ENCODE measurements at regions of chr17 and their contacts with region 1.

Region 1: GRCh38 chr17:14300575-14301278 is at the start of gene HS3ST3B1:
- DNase-seq: peak; percentile 99
- ATAC-seq: peak; percentile 80 to 94 (median 82)
- H3K4me3 ChIP-seq: peak within 1 kb of the TSS; percentile 58
- H3K4me3 Mint-ChIP-seq: peak within 1 kb of the TSS; percentile 97
- H3K27ac ChIP-seq: peak within 1 kb of the TSS; percentile 77
- H3K27ac Mint-ChIP-seq: peak within 1 kb of the TSS; percentile 91 to 93
- H3K4me1 ChIP-seq: peaks cover 62% of the 10 kb centered on the region
- H3K4me1 Mint-ChIP-seq: peaks cover 57 to 76% of the 10 kb centered on the region in 2 donors
- H3K27me3 ChIP-seq: peaks cover 17% of the 10 kb centered on the region
- H3K27me3 Mint-ChIP-seq: peaks cover 17 to 22% of the 10 kb centered on the region in 2 donors
- CTCF ChIP-seq: no peak
- total RNA-seq, gene HS3ST3B1: 14.1 to 18.6 (median 17.1) TPM

Region 2: DNA sequence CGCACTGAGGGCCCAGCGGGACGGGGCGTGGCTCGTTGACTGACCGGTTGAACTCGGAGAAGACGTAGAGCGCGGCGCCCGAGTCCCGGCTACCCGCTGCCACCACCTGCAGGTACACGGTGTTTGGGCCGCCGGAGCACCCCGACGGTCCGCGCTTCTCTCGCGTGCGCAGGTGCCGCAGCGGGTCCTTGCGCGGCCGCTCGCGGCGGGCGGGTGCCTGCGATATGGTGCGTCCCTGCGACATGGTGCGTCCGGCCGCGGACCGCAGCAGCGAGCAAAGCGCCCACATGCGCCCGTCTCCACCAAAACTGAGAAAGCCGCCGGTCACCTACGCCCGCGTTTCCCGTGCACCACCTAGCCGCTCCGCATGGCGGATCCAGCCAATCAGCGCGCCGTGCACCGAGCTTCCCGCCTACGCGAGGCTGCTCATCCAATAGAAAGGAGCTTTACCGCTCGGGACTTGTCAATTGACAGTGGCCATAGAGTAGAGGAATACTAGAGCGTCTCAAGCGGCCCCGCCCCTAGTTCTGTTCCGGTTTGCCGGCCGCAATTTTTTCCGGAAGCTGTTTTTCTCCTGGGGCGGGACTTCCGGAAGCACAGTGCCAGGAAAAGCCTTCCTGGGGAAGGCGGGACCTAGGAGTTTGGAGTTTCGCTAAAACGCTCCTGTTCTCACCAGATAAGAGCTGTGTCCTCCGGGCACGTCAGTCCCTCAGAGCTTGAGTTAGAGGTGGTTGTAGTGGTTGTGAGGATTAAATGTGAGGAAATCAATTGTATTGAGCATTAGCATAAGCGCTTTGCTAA is 1282.9 kb before region 1 on chr17 and contains the start of gene ELAC2:
- intact Hi-C with region 1: loop called (anchors 2 kb)
- DNase-seq: peak; percentile 94 to 98
- ATAC-seq: peak; percentile 98 to 100 (median 98)
- H3K4me3 ChIP-seq: peak within 1 kb of the TSS; percentile 56
- H3K4me3 Mint-ChIP-seq: peak within 1 kb of the TSS; percentile 98
- H3K27ac ChIP-seq: peak within 1 kb of the TSS; percentile 71
- H3K27ac Mint-ChIP-seq: peak within 1 kb of the TSS; percentile 93 to 96
- H3K4me1 ChIP-seq: peaks cover 18% of the 10 kb centered on the region
- H3K4me1 Mint-ChIP-seq: peaks cover 32 to 36% of the 10 kb centered on the region in 2 donors
- H3K27me3 ChIP-seq: no peaks in the 10 kb centered on the region
- H3K27me3 Mint-ChIP-seq: no peaks in the 10 kb centered on the region
- CTCF ChIP-seq: no peak
- total RNA-seq, gene ELAC2: 65.5 to 84.2 (median 83.4) TPM

Region 3: GRCh38 chr17:13594762-13595598 is 705.7 kb before region 1 on chr17:
- intact Hi-C with region 1: loop called (anchors 1 kb)
- DNase-seq: peak; percentile 53 to 91
- ATAC-seq: peak; percentile 71 to 84 (median 76)
- H3K4me3 ChIP-seq: no peak overlapping the region
- H3K4me3 Mint-ChIP-seq: no peak overlapping the region
- H3K27ac ChIP-seq: no peak overlapping the region
- H3K27ac Mint-ChIP-seq: no peak overlapping the region
- H3K4me1 ChIP-seq: no peaks in the 10 kb centered on the region
- H3K4me1 Mint-ChIP-seq: peaks cover 5 to 6% of the 10 kb centered on the region in 2 donors
- H3K27me3 ChIP-seq: peaks cover 3% of the 10 kb centered on the region
- H3K27me3 Mint-ChIP-seq: peaks cover 41 to 42% of the 10 kb centered on the region in 2 donors
- CTCF ChIP-seq: peak; percentile 93

Region 4: GRCh38 chr17:14048169-14048568 is 252.6 kb before region 1 on chr17:
- intact Hi-C with region 1: loop called (anchors 1 kb)
- DNase-seq: peak in 1 of 2 donors; percentile 38
- ATAC-seq: peak in 2 of 3 donors; percentile 54
- H3K4me3 ChIP-seq: no peak overlapping the region
- H3K4me3 Mint-ChIP-seq: no peak overlapping the region
- H3K27ac ChIP-seq: no peak overlapping the region
- H3K27ac Mint-ChIP-seq: no peak overlapping the region
- H3K4me1 ChIP-seq: no peaks in the 10 kb centered on the region
- H3K4me1 Mint-ChIP-seq: peaks cover 5 to 9% of the 10 kb centered on the region in 2 donors
- H3K27me3 ChIP-seq: no peaks in the 10 kb centered on the region
- H3K27me3 Mint-ChIP-seq: no peaks in the 10 kb centered on the region
- CTCF ChIP-seq: peak; percentile 25

Region 5: GRCh38 chr17:14203388-14203787 is 97.3 kb before region 1 on chr17:
- intact Hi-C with region 1: loop called (anchors 2 kb)
- DNase-seq: peak in 1 of 2 donors; percentile 74
- ATAC-seq: peak in 2 of 3 donors; percentile 11 to 39
- H3K4me3 ChIP-seq: no peak overlapping the region
- H3K4me3 Mint-ChIP-seq: peak overlapping the region; percentile 40
- H3K27ac ChIP-seq: peak overlapping the region; percentile 34
- H3K27ac Mint-ChIP-seq: peak overlapping the region; percentile 91 to 92
- H3K4me1 ChIP-seq: peaks cover 92% of the 10 kb centered on the region
- H3K4me1 Mint-ChIP-seq: peaks cover 98 to 100% of the 10 kb centered on the region in 2 donors
- H3K27me3 ChIP-seq: no peaks in the 10 kb centered on the region
- H3K27me3 Mint-ChIP-seq: no peaks in the 10 kb centered on the region
- CTCF ChIP-seq: peak; percentile 39

Region 6: DNA sequence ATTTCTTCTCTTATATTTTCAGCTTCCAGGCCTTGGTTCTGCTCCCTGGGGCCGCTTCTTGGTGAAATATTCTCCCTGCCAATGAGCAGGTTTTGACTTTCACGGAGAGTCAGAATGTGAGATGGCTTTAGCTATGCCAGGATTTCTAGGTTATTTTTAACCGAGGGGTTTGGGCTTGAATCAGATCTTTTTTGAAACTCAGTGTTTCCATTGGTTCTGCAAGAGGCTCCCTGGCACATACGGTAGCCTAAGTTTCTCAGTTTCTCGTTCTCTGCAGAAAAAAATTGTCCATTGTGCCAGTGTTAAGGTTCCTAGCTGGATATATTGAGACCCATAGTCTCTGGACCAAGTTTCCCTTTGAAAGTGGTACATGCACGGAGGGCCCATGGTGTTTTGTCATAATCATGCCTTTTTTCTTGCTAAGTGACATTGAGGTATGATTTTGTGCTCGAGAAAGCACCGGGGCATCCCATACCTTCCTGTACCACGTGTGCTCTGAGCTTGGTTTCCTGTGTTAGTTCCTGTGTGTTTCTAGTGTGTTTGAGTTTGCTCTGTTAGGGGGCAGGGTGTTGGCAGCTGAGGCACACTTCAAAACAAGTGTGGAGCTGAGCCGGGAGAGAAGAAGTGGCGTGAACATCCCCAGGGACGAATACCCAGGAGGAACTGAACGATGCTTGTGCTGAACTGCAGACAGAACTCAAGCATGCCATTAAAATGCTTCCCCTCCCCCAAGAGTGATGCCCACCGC is 127.3 kb after region 1 on chr17:
- intact Hi-C with region 1: loop called (anchors 2 kb)
- DNase-seq: peak; percentile 55 to 87
- ATAC-seq: peak; percentile 95 to 99 (median 98)
- H3K4me3 ChIP-seq: peak overlapping the region; percentile 13
- H3K4me3 Mint-ChIP-seq: peak overlapping the region; percentile 88
- H3K27ac ChIP-seq: peak overlapping the region; percentile 74
- H3K27ac Mint-ChIP-seq: peak overlapping the region; percentile 77 to 85
- H3K4me1 ChIP-seq: peaks cover 34% of the 10 kb centered on the region
- H3K4me1 Mint-ChIP-seq: peaks cover 54 to 58% of the 10 kb centered on the region in 2 donors
- H3K27me3 ChIP-seq: no peaks in the 10 kb centered on the region
- H3K27me3 Mint-ChIP-seq: peaks cover 0 to 2% of the 10 kb centered on the region in 2 donors
- CTCF ChIP-seq: no peak

Measured in natural killer cell (primary cell).